AG04450 (cell line): ENCODE measurements at regions of chr3 and their contacts with region 1.

Region 1: GRCh38 chr3:14203521-14204079 is 25.0 kb downstream of the LSM3 start:
- DNase-seq: peak; percentile 77
- H3K4me3 ChIP-seq: no peak overlapping the region
- H3K27ac ChIP-seq: no peak overlapping the region
- H3K27me3 ChIP-seq: no peaks in the 10 kb centered on the region
- CTCF ChIP-seq: peak; percentile 91

Region 2: GRCh38 chr3:14222900-14223594 is 19.4 kb after region 1 on chr3:
- CTCF ChIA-PET with region 1: interaction called, 42 read pairs
- POLR2A ChIA-PET with region 1: interaction called, 3 read pairs
- DNase-seq: no peak
- H3K4me3 ChIP-seq: no peak overlapping the region
- H3K27ac ChIP-seq: no peak overlapping the region
- H3K27me3 ChIP-seq: no peaks in the 10 kb centered on the region
- CTCF ChIP-seq: no peak

Region 3: DNA sequence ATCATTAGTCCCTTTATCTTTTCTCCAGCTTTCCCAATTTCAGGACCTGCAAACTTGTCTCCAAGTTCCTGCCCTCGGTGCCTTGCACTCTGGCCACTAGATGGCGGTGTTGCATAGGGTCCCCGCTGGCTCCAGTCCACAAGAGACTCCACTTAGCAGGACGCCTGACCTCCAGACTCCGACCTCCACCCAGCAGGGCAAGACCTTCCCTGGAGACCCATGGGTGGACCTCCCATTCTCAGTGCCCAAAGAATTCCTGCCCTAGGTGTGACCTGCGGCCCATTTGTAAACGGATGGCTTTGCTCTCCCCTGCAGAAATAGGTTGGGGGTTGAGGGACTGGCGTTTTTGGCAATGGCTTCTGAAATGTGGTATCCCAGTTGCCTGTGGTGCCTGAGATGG is 57.6 kb after region 1 on chr3:
- CTCF ChIA-PET with region 1: interaction called, 112 read pairs
- POLR2A ChIA-PET with region 1: no interaction called
- DNase-seq: peak; percentile 48
- H3K4me3 ChIP-seq: no peak overlapping the region
- H3K27ac ChIP-seq: no peak overlapping the region
- H3K27me3 ChIP-seq: no peaks in the 10 kb centered on the region
- CTCF ChIP-seq: peak; percentile 99

Region 4: GRCh38 chr3:14345308-14346150 is 141.9 kb after region 1 on chr3:
- CTCF ChIA-PET with region 1: no interaction called
- POLR2A ChIA-PET with region 1: no interaction called
- DNase-seq: no peak
- H3K4me3 ChIP-seq: no peak overlapping the region
- H3K27ac ChIP-seq: no peak overlapping the region
- H3K27me3 ChIP-seq: peaks cover 22% of the 10 kb centered on the region
- CTCF ChIP-seq: no peak

Region 5: GRCh38 chr3:14402304-14402811 is 198.8 kb after region 1 on chr3 and contains the start of gene SLC6A6:
- CTCF ChIA-PET with region 1: interaction called, 33 read pairs
- POLR2A ChIA-PET with region 1: no interaction called
- DNase-seq: peak; percentile 84
- H3K4me3 ChIP-seq: peak within 1 kb of the TSS; percentile 75
- H3K27ac ChIP-seq: no peak within 1 kb of the TSS
- H3K27me3 ChIP-seq: peaks cover 2% of the 10 kb centered on the region
- CTCF ChIP-seq: peak; percentile 47
- polyA plus RNA-seq, gene SLC6A6: 30.8 and 33.5 TPM in 2 replicates

Region 6: DNA sequence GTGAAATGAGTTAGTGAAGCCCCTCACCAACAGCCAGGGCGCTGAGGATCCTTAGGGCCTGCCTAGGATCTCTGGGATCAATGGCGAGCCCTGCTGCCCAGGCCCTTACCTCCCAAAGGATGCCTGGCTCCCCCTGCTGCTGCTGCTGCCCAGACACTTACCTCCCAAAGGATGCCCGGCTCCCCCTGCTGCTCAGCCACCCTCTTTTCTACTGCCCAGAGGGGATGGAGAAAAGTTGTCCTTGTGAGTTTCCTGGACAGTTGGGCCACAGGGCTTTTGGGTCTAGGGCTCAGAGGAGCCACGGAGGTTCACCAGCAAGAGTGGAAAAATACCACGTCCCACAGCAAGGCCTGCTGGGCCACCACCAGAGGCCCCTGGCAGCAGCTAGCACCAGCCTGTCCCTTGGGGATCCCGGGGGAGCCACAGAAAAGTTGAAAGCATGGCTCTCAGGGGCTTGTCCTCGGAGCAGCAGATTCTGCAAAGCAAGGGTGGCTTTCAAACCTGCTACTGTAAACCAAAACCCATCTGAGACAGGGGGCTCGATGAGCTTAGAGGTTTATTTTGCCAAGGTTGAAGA is 258.2 kb after region 1 on chr3:
- CTCF ChIA-PET with region 1: interaction called, 153 read pairs
- POLR2A ChIA-PET with region 1: interaction called, 3 read pairs
- DNase-seq: peak; percentile 34
- H3K4me3 ChIP-seq: no peak overlapping the region
- H3K27ac ChIP-seq: no peak overlapping the region
- H3K27me3 ChIP-seq: no peaks in the 10 kb centered on the region
- CTCF ChIP-seq: peak; percentile 89

Region 7: GRCh38 chr3:14651440-14652251 is 448.0 kb after region 1 on chr3 and contains the start of gene CCDC174:
- CTCF ChIA-PET with region 1: interaction called, 31 read pairs
- POLR2A ChIA-PET with region 1: no interaction called
- DNase-seq: peak; percentile 97
- H3K4me3 ChIP-seq: peak within 1 kb of the TSS; percentile 98
- H3K27ac ChIP-seq: peak within 1 kb of the TSS; percentile 88
- H3K27me3 ChIP-seq: peaks cover 2% of the 10 kb centered on the region
- CTCF ChIP-seq: 0 out of 2 replicates have a peak, but pooled peaks have one; percentile 5
- polyA plus RNA-seq, gene CCDC174: 10.0 and 13.9 TPM in 2 replicates